ENCODE measurements at regions of chr2 and their contacts with region 1.

Region 1: DNA sequence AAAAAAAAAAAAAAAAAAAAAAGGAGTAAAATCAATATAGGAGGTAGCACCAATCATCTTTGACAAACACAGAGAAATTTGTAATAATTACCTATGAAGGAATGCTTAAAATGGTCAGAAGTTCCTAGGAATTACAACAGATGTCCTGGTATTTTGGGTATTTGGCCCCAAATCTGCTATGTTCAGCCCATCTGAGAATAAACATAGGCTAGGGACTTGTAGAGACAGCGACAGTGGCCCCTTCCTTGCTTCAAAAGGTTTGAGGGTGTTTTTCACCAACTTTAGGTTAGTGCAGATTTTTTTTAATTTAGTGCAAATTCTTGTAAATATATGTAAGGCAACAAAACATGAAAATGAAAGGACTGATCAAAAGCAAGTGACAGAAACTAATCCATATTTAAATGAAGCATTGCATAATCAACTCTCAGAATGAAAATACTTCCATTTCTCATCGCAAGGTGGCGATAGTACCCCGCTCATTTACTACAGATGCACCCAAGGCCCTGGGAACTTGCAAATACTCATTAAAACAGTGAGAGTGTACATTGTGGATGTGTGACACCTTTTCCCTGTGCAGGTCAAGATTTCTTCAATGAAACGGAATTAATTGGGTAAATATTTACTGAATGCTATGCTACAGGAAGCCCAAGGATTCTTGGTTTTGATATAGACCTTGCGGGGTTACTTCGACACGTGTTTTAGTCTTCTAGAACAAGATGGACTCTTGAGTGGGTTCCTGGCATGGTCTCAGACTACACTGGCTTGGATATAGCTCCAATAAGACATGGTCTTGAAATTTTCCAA is 44.6 kb downstream of the FAM124B start:
- DNase-seq: peak; percentile 82
- H3K4me3 ChIP-seq: no peak overlapping the region
- H3K27ac ChIP-seq: no peak overlapping the region
- H3K4me1 ChIP-seq: no peaks in the 10 kb centered on the region
- H3K27me3 ChIP-seq: peaks cover 0 to 3% of the 10 kb centered on the region in 2 experiments
- CTCF ChIP-seq: peak; percentile 44 to 68
- POLR2A ChIP-seq: no peak

Region 2: GRCh38 chr2:224272237-224272910 is 84.9 kb before region 1 on chr2:
- CTCF ChIA-PET with region 1: no interaction called
- POLR2A ChIA-PET with region 1: no interaction called
- dilution Hi-C with region 1: no loop called
- intact Hi-C with region 1: no loop called
- DNase-seq: no peak
- H3K4me3 ChIP-seq: no peak overlapping the region
- H3K27ac ChIP-seq: no peak overlapping the region
- H3K4me1 ChIP-seq: no peaks in the 10 kb centered on the region
- H3K27me3 ChIP-seq: peaks cover 6 to 7% of the 10 kb centered on the region in 2 experiments
- CTCF ChIP-seq: no peak
- POLR2A ChIP-seq: no peak

Region 3: DNA sequence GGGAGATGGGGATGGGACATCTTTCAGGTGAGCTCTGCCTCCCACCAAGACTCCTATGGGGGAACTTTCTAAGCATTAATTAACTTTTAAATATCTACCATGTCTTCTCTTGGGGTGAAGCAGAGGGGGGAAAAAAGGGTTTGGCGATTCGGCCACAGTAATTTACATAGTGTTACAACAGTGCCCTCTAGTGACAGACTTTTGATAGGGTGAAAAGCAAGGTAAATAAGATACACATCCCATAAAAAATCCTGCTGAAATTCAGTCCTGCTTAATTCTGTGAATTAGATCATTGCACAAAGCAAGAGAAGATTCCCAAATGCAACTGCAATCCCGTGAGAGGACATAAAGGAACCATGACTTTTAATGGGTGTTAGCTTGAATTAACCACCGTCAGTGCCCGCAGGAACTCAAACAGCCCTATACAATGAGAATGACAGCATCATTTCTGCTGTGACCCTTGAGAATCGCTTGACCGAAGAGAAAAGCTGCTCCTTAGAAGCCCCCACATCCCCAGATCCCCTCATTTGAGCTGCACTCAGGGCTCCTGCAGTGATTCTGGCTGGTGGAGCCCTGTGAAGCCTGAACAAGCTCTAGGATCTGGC is 11.8 kb after region 1 on chr2:
- CTCF ChIA-PET with region 1: interaction called, 28 read pairs
- POLR2A ChIA-PET with region 1: no interaction called
- dilution Hi-C with region 1: no loop called
- intact Hi-C with region 1: no loop called
- DNase-seq: no peak
- H3K4me3 ChIP-seq: no peak overlapping the region
- H3K27ac ChIP-seq: no peak overlapping the region
- H3K4me1 ChIP-seq: no peaks in the 10 kb centered on the region
- H3K27me3 ChIP-seq: no peaks in the 10 kb centered on the region
- CTCF ChIP-seq: peak; percentile 49 to 50
- POLR2A ChIP-seq: no peak

Region 4: DNA sequence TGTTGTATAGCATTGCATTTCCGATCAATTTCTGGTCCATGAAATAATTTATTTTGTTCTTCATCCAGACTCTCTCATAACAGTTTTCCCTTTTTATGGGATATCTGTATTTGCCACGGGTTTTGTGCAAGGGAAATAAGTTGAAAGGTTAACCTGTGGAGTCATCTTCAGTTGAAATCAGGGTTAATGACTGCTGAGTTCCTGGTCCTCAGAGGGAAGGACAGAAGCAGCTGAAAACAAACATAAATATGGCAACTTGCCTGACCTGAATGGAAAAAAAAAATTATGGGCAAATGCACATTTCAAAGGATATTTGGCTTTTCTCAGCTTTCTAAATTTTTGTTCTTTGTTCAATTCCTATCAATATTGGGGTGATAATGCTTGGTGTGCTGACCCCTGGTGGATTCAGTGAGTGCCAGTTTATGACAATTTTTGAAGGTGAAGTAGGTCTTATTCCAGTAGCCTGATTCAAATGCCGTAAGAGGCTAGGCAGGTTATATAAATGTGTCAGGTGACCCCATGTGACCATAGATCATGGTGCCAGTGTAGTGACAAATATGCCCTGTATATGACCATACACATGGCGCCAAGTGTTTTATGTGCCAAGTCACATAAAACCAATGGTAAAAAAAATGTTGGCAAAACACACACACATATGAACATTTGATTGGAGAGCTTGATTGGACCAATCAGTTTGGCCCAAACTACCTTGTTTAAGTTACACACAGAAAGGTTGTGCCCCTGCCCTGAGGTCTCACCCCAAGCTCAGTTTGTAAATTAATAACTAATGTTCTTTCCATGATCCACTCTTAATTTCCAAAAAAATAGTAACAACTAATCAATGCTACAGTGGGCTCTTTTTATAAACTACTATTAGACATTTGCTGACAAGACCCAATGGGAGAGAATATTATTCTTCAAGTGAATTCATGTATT is 92.2 kb after region 1 on chr2:
- CTCF ChIA-PET with region 1: interaction called, 46 read pairs
- POLR2A ChIA-PET with region 1: no interaction called
- dilution Hi-C with region 1: no loop called
- intact Hi-C with region 1: loop called (anchors 1 kb)
- DNase-seq: peak; percentile 85
- H3K4me3 ChIP-seq: no peak overlapping the region
- H3K27ac ChIP-seq: no peak overlapping the region
- H3K4me1 ChIP-seq: peaks cover 8% of the 10 kb centered on the region
- H3K27me3 ChIP-seq: no peaks in the 10 kb centered on the region
- CTCF ChIP-seq: peak; percentile 52 to 59
- POLR2A ChIP-seq: no peak

Region 5: GRCh38 chr2:224520064-224520463 is 162.8 kb after region 1 on chr2:
- CTCF ChIA-PET with region 1: no interaction called
- POLR2A ChIA-PET with region 1: no interaction called
- dilution Hi-C with region 1: no loop called
- intact Hi-C with region 1: no loop called
- DNase-seq: no peak
- H3K4me3 ChIP-seq: no peak overlapping the region
- H3K27ac ChIP-seq: no peak overlapping the region
- H3K4me1 ChIP-seq: peaks cover 2% of the 10 kb centered on the region
- H3K27me3 ChIP-seq: no peaks in the 10 kb centered on the region
- CTCF ChIP-seq: no peak
- POLR2A ChIP-seq: no peak

Region 6: GRCh38 chr2:224650815-224651439 is 293.6 kb after region 1 on chr2:
- CTCF ChIA-PET with region 1: interaction called, 22 read pairs
- POLR2A ChIA-PET with region 1: no interaction called
- dilution Hi-C with region 1: no loop called
- intact Hi-C with region 1: loop called (anchors 1 kb)
- DNase-seq: peak; percentile 61
- H3K4me3 ChIP-seq: no peak overlapping the region
- H3K27ac ChIP-seq: no peak overlapping the region
- H3K4me1 ChIP-seq: no peaks in the 10 kb centered on the region
- H3K27me3 ChIP-seq: no peaks in the 10 kb centered on the region
- CTCF ChIP-seq: peak; percentile 49 to 60
- POLR2A ChIP-seq: no peak

Region 7: GRCh38 chr2:224778474-224778877 is 421.2 kb after region 1 on chr2:
- CTCF ChIA-PET with region 1: interaction called, 3 read pairs
- POLR2A ChIA-PET with region 1: no interaction called
- dilution Hi-C with region 1: no loop called
- intact Hi-C with region 1: loop called (anchors 1 kb)
- DNase-seq: peak; percentile 83
- H3K4me3 ChIP-seq: no peak overlapping the region
- H3K27ac ChIP-seq: no peak overlapping the region
- H3K4me1 ChIP-seq: no peaks in the 10 kb centered on the region
- H3K27me3 ChIP-seq: no peaks in the 10 kb centered on the region
- CTCF ChIP-seq: peak; percentile 55 to 61
- POLR2A ChIP-seq: no peak